ENCODE measurements at regions of chr1 and their contacts with region 1.

Region 1: GRCh38 chr1:54579337-54579781 is 31.3 kb downstream of the ACOT11 start:
- DNase-seq: no peak
- H3K4me3 Mint-ChIP-seq: no peak overlapping the region
- H3K27ac Mint-ChIP-seq: no peak overlapping the region
- H3K4me1 Mint-ChIP-seq: no peaks in the 10 kb centered on the region
- H3K27me3 Mint-ChIP-seq: no peaks in the 10 kb centered on the region
- CTCF ChIP-seq: no peak

Region 2: GRCh38 chr1:53979712-53980450 is 599.5 kb before region 1 on chr1:
- CTCF ChIA-PET with region 1: no interaction called
- intact Hi-C with region 1: no loop called
- DNase-seq: no peak
- H3K4me3 Mint-ChIP-seq: no peak overlapping the region
- H3K27ac Mint-ChIP-seq: no peak overlapping the region
- H3K4me1 Mint-ChIP-seq: peaks cover 12% of the 10 kb centered on the region
- H3K27me3 Mint-ChIP-seq: no peaks in the 10 kb centered on the region
- CTCF ChIP-seq: no peak

Region 3: GRCh38 chr1:54376430-54377039 is 202.8 kb before region 1 on chr1:
- CTCF ChIA-PET with region 1: no interaction called
- intact Hi-C with region 1: no loop called
- DNase-seq: peak; percentile 31
- H3K4me3 Mint-ChIP-seq: no peak overlapping the region
- H3K27ac Mint-ChIP-seq: peak overlapping the region; percentile 48
- H3K4me1 Mint-ChIP-seq: peaks cover 40% of the 10 kb centered on the region
- H3K27me3 Mint-ChIP-seq: no peaks in the 10 kb centered on the region
- CTCF ChIP-seq: no peak

Region 4: GRCh38 chr1:54519709-54520108 is 59.6 kb before region 1 on chr1:
- CTCF ChIA-PET with region 1: no interaction called
- intact Hi-C with region 1: no loop called
- DNase-seq: no peak
- H3K4me3 Mint-ChIP-seq: no peak overlapping the region
- H3K27ac Mint-ChIP-seq: no peak overlapping the region
- H3K4me1 Mint-ChIP-seq: no peaks in the 10 kb centered on the region
- H3K27me3 Mint-ChIP-seq: peaks cover 26% of the 10 kb centered on the region
- CTCF ChIP-seq: no peak

Region 5: DNA sequence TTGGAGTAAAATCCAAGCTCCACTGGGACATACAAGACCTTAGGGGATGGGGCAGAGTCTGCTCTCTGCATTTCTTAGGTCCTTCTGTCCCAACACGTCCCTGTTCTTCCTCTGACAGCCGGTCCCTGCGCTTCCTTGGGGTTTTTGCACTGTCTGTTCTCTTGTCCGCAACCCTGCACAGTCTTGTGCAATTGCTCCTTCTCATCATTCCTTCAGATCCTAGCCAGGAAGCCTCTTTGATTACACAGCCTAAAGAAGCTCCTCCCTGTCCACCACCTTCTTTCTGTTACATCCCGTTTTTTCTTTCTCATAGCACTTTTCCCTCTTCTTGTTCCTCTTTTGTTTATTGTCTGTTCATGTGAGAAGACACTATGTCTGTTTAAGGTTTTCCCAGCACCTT is 11.4 kb before region 1 on chr1:
- CTCF ChIA-PET with region 1: interaction called, 13 read pairs
- intact Hi-C with region 1: no loop called
- DNase-seq: no peak
- H3K4me3 Mint-ChIP-seq: no peak overlapping the region
- H3K27ac Mint-ChIP-seq: no peak overlapping the region
- H3K4me1 Mint-ChIP-seq: peaks cover 16% of the 10 kb centered on the region
- H3K27me3 Mint-ChIP-seq: no peaks in the 10 kb centered on the region
- CTCF ChIP-seq: no peak